ENCODE measurements at regions of chr3 and their contacts with region 1.

Region 1: DNA sequence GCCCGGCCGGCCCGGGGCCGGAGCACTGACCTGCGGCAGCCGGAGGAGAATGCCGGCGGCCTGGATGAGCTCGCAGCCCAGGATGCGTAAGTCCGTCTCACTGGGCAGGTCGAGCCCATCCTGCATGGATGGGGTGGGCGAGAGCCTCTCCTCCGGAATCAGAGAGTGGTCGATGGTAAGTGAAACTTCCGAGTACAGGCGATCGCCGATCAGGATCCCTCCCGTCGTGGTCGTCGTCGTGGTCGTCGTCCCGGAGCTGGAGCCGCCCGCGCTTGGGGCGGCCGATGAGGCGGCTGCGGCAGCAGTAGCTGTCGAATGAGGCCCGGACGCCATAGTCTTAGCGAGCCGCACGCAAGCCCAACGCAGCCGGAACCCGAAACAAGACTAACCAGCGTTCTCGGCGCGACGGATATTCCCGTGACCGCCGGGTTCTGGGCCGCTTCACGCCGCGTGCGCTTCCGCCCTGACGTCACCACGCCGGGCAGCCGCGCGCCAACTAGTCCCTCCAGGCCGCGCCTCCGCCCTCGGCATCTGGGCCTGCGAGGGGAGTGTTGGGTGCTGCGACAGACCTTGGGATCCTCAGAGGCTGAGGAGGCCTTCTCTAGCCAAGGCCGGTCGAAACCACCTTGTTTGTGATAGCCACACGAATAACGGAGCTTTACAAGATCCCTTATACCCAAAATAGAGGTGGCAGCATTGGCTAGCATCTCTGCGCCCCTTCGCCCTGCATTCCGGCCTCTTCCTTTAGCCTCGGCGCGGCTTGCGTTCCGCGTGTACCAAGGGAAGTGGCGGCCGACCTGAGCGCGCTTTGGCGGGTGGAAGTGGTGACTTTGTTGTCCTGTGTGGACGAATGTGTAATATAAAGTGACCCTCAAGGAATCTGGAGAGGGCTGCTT is at the start of gene CCNL1:
- DNase-seq: peak; percentile 96 to 98
- H3K4me3 ChIP-seq: peak within 1 kb of the TSS; percentile 87 to 93
- H3K27ac ChIP-seq: peak within 1 kb of the TSS; percentile 96 to 99
- H3K4me1 ChIP-seq: peaks cover 6 to 30% of the 10 kb centered on the region in 2 donors
- H3K27me3 ChIP-seq: peaks cover 0 to 4% of the 10 kb centered on the region in 2 donors
- CTCF ChIP-seq: peak in 1 of 4 experiments; percentile 7
- POLR2A ChIP-seq: peak; percentile 94 to 100
- total RNA-seq, gene CCNL1: 100 to 252 (median 155) TPM

Region 2: GRCh38 chr3:157174649-157175498 is 14.9 kb after region 1 on chr3:
- intact Hi-C with region 1: loop called (anchors 2 kb)
- DNase-seq: peak; percentile 99 to 100
- H3K4me3 ChIP-seq: peak overlapping the region; percentile 64 to 68
- H3K27ac ChIP-seq: peak overlapping the region; percentile 98
- H3K4me1 ChIP-seq: no peaks in the 10 kb centered on the region
- H3K27me3 ChIP-seq: no peaks in the 10 kb centered on the region
- CTCF ChIP-seq: peak in 2 of 4 experiments; percentile 31 to 33
- POLR2A ChIP-seq: peak; percentile 76 to 96